Dorsolateral prefrontal cortex (tissue), 120 donors: ENCODE measurements at regions of chr11 and their contacts with region 1.

Region 1: DNA sequence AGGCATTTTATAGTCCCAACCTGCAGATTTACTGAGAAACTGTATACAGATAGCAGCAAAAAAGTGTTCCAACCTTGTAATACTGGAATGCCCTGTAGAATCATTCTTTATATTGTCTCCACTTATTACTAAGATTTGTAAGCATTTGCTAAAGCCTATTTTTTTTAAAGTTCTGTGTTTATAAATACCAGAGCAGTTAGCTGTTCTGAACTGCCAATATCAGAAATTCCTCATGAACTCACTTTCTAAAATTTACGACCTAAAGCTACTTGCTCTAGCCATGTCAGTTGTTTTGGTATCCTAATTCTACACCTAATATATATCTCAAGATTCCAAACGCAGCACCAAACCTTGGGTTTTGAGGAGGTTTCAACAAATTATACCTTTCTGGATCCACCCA is 103.2 kb downstream of the C11orf65 start:
- DNase-seq: no peak
- H3K4me3 ChIP-seq: no peak overlapping the region
- H3K27ac ChIP-seq: no peak overlapping the region
- H3K27me3 ChIP-seq: no peaks in the 10 kb centered on the region
- CTCF ChIP-seq: no peak

Region 2: GRCh38 chr11:108340970-108341369 is 23.2 kb before region 1 on chr11:
- intact Hi-C with region 1: no loop called
- DNase-seq: no peak
- H3K4me3 ChIP-seq: no peak overlapping the region
- H3K27ac ChIP-seq: no peak overlapping the region
- H3K27me3 ChIP-seq: no peaks in the 10 kb centered on the region
- CTCF ChIP-seq: no peak

Region 3: DNA sequence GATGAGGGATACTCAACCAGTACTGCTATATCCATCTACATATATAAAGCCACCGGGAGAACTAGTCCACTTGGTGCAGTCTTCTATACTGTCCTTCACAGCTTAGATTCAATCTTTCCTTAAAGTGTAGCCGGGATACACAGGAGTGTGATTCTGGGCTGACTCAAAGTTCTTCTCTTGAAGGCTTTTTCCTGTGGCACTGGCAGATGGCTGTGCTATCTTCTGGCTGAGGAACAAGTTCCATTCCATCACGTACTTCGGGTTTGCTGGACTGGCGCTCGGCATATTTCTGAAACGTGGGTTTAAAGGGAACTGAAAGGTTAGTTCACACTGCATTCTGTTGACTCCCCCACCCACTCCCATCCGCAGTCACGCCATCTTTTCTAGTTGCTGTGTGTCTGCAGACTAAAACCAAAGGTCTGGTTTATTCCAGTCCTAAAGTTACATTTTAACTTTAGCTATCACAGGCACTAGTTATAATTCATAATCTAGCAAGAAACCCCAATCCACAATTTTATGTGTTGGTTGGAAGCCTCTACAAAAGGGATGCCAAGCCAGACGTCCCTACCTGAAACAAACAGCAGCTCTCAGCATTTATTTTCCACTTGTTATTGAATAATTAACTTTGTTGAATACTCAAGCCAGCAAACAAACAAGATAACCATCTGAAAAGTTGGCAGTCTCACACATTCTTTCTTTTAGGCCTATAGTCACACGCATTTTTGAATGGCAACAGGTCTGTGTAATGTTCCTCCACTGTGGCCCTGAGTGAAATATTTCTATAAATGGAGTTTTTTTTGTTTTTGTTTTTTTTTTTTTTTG is 110.7 kb after region 1 on chr11:
- intact Hi-C with region 1: loop called in 1 of 2 experiments (anchors 10 kb)
- DNase-seq: no peak
- H3K4me3 ChIP-seq: no peak overlapping the region
- H3K27ac ChIP-seq: no peak overlapping the region
- H3K27me3 ChIP-seq: no peaks in the 10 kb centered on the region
- CTCF ChIP-seq: no peak